ENCODE measurements at regions of chr1 and their contacts with region 1.

Region 1: GRCh38 chr1:24201941-24202440 is 14.9 kb upstream of the IFNLR1 start:
- DNase-seq: peak; percentile 97
- ATAC-seq: peak; percentile 83
- H3K4me3 ChIP-seq: no peak overlapping the region
- H3K27ac ChIP-seq: peak overlapping the region; percentile 88
- H3K4me1 ChIP-seq: peaks cover 33% of the 10 kb centered on the region
- H3K27me3 ChIP-seq: no peaks in the 10 kb centered on the region
- CTCF ChIP-seq: peak; percentile 89

Region 2: DNA sequence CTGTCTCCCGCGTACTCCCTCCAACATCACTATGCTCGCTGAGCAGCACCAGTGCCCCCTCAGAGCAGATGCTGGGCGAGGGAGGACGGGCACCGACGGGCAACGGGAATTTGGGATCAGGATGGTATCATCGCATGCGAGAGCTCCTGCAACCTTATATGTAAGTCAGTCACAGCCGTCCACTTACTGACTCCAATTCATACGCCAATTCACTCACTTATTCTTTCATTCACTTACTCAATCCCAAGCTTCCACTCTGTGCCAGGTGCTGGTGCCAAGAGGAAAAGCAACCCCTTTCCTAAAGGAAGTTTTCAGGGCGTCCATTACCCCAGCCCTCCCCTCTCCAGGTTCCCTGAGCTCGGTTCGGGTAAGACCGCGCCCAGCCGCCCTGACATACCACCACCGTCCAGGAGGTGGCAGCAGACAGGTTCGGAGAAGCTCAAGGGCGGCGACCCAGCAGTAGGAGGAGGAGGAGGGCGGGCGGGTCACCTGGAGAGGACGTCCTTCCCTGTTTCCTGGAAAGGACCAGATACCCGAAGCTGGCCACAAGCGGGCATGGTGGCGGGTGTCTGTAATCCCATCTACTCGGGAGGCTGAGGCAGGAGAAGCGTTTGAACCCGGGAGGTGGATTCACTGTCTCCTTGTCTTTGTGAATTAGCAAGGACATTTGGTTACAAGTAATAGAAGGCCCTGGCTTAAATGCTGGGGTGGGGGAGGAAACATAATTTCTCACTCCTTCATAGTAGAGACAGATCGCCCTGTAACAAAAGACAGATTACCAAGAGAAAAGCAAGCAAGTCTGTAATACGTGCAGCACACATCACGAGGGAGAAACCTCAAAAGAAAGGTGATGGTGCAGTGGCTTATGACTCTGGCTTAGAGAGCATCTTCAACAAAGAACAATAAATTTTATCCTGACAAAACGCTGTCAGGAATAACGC is 51.5 kb before region 1 on chr1:
- CTCF ChIA-PET with region 1: interaction called, 41 read pairs
- POLR2A ChIA-PET with region 1: no interaction called
- intact Hi-C with region 1: no loop called
- DNase-seq: peak; percentile 95
- ATAC-seq: peak; percentile 92
- H3K4me3 ChIP-seq: peak overlapping the region; percentile 68
- H3K27ac ChIP-seq: peak overlapping the region; percentile 77
- H3K4me1 ChIP-seq: peaks cover 23% of the 10 kb centered on the region
- H3K27me3 ChIP-seq: no peaks in the 10 kb centered on the region
- CTCF ChIP-seq: peak; percentile 79

Region 3: GRCh38 chr1:24283326-24284155 is 81.5 kb after region 1 on chr1:
- CTCF ChIA-PET with region 1: interaction called, 5 read pairs
- POLR2A ChIA-PET with region 1: no interaction called
- intact Hi-C with region 1: loop called (anchors 1 kb)
- DNase-seq: peak; percentile 98
- ATAC-seq: peak; percentile 81
- H3K4me3 ChIP-seq: peak overlapping the region; percentile 44
- H3K27ac ChIP-seq: peak overlapping the region; percentile 98
- H3K4me1 ChIP-seq: peaks cover 47% of the 10 kb centered on the region
- H3K27me3 ChIP-seq: no peaks in the 10 kb centered on the region
- CTCF ChIP-seq: no peak

Region 4: GRCh38 chr1:24308365-24309015 is 106.5 kb after region 1 on chr1:
- CTCF ChIA-PET with region 1: interaction called, 21 read pairs
- POLR2A ChIA-PET with region 1: no interaction called
- intact Hi-C with region 1: loop called (anchors 1 kb)
- DNase-seq: peak; percentile 36
- ATAC-seq: peak; percentile 63; the same call in 1 of the 2 replicates
- H3K4me3 ChIP-seq: no peak overlapping the region
- H3K27ac ChIP-seq: no peak overlapping the region
- H3K4me1 ChIP-seq: peaks cover 11% of the 10 kb centered on the region
- H3K27me3 ChIP-seq: no peaks in the 10 kb centered on the region
- CTCF ChIP-seq: peak; percentile 52

Region 5: DNA sequence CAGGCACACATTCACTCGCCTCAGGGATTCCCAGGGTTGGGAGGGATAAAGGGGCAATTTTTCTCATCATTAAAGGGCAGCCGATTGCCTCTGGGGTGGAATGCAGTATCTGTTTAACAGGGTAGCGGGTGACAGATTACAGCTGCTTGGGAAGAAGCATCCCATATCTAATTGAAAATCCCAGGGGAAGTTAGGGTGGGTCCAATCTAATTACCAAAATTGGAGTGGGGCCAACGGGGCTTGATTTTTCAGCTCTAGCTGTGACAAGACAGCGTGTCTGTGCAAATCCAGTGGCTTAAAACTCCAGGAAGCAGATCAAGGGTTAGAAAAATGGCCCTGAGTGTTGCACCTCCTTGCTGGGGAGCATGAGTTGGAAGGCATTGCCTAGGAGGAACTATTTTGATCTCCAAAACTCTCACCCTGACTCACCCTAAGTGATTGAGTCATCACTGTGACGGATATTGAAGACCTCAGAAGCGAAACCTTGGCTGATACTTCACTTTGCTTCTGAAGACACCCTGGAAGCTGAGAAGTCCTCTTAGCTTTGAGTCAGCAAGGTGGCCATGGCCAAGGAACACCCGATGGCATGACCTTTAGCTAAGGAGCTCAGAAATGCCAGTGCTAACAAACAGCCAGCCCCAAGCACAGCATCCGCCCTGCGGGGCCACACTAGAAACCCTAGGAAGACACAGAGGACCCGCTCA is 163.1 kb after region 1 on chr1:
- CTCF ChIA-PET with region 1: interaction called, 12 read pairs
- POLR2A ChIA-PET with region 1: interaction called, 5 read pairs
- intact Hi-C with region 1: no loop called
- DNase-seq: peak; percentile 97
- ATAC-seq: peak; percentile 80
- H3K4me3 ChIP-seq: peak overlapping the region; percentile 38; the same call in 1 of the 2 replicates
- H3K27ac ChIP-seq: peak overlapping the region; percentile 100
- H3K4me1 ChIP-seq: peaks cover 42% of the 10 kb centered on the region
- H3K27me3 ChIP-seq: no peaks in the 10 kb centered on the region
- CTCF ChIP-seq: no peak

Region 6: DNA sequence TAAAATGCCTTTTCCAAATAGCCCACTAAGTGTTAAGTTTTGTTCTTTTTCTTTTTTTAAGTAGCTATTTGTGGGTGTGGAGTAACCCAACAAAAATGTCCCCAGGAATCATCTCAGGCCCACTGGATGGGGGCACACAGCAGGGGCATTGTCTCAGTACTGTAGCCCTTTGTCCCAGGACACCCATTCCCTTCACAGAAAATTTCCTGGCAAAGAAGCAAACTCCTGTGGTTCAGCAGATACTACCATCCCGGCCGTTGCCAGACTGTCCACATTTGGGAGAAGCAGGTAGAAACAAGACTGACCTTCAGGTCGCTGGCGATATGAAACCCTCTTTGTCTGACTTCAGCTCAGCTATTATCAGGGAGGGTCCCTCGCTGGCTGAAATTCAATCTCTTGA is 417.4 kb after region 1 on chr1:
- CTCF ChIA-PET with region 1: interaction called, 3 read pairs
- POLR2A ChIA-PET with region 1: interaction called, 11 read pairs
- intact Hi-C with region 1: no loop called
- DNase-seq: no peak
- ATAC-seq: no peak
- H3K4me3 ChIP-seq: no peak overlapping the region
- H3K27ac ChIP-seq: no peak overlapping the region
- H3K4me1 ChIP-seq: no peaks in the 10 kb centered on the region
- H3K27me3 ChIP-seq: no peaks in the 10 kb centered on the region
- CTCF ChIP-seq: no peak

Measured in PC-3 (cell line).